BJ (cell line): ENCODE measurements at regions of chr7 and their contacts with region 1.

Region 1: DNA sequence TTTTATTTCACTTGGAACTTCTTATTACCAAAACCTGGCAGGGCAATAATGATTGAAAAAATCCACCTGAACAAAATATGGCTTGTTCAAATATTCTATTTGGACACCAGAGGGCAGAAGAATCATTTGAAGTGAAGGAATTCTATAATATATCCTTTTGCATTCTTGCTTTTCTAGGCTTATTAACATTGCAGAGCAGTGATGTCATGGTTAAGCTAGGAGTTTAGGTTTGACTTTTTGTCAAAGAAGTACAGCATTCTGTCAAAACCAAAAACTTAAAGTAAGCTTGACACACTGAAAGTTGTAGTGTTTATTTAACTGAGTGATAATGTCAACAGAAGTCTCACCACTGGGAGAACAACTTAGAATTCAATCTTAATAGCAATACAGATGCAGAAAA is 156.0 kb downstream of the SEMA3D start:
- DNase-seq: no peak
- H3K4me3 ChIP-seq: no peak overlapping the region
- H3K27me3 ChIP-seq: no peaks in the 10 kb centered on the region
- CTCF ChIP-seq: peak; percentile 49

Region 2: DNA sequence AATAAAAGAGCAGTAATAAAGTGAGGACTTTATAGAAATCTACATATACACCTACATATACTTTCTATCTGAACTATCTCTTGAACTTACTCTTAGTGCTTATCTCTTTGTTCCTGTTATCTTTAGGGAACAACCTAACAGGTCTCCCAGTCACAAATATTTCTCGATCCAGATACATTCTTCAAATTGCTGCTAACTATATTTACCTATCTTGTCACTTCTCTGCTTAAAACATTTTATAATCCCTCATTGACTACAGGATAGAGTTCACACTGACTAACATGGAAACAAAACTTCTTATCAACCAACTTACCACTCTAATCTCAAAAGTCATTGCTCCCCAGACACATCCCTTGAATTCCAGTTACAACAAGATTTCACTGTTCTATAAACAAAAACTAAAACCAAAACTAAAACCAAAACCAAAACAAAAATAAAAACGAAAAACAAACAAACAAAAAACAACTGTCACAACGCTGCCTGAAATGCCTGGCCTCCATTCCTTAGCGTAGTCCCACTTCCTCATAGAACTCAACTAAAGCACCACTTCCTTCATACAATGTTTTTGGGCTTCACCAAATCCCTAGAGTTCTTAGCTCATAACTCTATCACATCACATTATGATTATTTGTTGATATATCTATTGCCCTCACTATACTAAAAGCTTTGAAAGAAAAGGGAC is 21.3 kb after region 1 on chr7:
- CTCF ChIA-PET with region 1: no interaction called
- POLR2A ChIA-PET with region 1: no interaction called
- DNase-seq: no peak
- H3K4me3 ChIP-seq: no peak overlapping the region
- H3K27me3 ChIP-seq: no peaks in the 10 kb centered on the region
- CTCF ChIP-seq: no peak

Region 3: GRCh38 chr7:85160223-85160622 is 129.3 kb after region 1 on chr7:
- CTCF ChIA-PET with region 1: no interaction called
- POLR2A ChIA-PET with region 1: no interaction called
- DNase-seq: no peak
- H3K4me3 ChIP-seq: peak overlapping the region; percentile 26
- H3K27me3 ChIP-seq: no peaks in the 10 kb centered on the region
- CTCF ChIP-seq: no peak

Region 4: GRCh38 chr7:85750454-85750949 is 719.6 kb after region 1 on chr7:
- CTCF ChIA-PET with region 1: interaction called, 10 read pairs
- POLR2A ChIA-PET with region 1: no interaction called
- DNase-seq: no peak
- H3K4me3 ChIP-seq: no peak overlapping the region
- H3K27me3 ChIP-seq: peaks cover 1% of the 10 kb centered on the region; the same call in 1 of the 2 replicates
- CTCF ChIP-seq: peak; percentile 80

Region 5: GRCh38 chr7:85829817-85830432 is 799.0 kb after region 1 on chr7:
- CTCF ChIA-PET with region 1: interaction called, 14 read pairs
- POLR2A ChIA-PET with region 1: no interaction called
- DNase-seq: no peak
- H3K4me3 ChIP-seq: no peak overlapping the region
- H3K27me3 ChIP-seq: no peaks in the 10 kb centered on the region
- CTCF ChIP-seq: peak; percentile 38; the same call in 1 of the 2 replicates

Region 6: DNA sequence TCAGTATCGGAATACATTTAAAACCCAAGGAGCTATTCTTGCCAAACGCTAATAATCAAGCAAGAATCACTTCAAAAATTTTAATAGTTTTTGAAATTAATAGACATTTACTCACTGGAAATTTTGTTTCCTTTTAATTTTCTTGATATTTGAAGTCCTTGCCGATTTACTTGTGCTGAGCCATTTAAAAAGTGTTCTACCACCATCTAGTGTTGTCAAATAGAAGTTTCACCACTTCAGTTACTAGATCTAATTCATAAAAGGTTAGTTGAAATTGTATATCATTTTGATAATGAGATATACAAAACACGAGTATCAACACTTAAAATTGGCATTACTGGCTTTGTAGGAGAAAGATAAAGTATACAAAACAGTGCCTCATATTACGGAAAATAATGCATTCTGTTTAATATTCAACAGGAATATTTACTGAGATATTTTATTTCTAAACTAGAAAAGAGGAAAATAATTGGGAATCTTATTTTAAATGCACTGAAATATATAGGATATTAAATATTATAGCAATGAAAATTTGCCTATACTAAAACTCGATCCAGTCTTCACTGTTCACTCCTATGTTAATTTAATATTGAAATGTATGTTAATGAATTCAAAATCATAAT is 820.8 kb after region 1 on chr7:
- CTCF ChIA-PET with region 1: interaction called, 15 read pairs
- POLR2A ChIA-PET with region 1: no interaction called
- DNase-seq: peak; percentile 11
- H3K4me3 ChIP-seq: no peak overlapping the region
- H3K27me3 ChIP-seq: no peaks in the 10 kb centered on the region
- CTCF ChIP-seq: peak; percentile 51